ENCODE measurements at regions of chr7 and their contacts with region 1.

Region 1: DNA sequence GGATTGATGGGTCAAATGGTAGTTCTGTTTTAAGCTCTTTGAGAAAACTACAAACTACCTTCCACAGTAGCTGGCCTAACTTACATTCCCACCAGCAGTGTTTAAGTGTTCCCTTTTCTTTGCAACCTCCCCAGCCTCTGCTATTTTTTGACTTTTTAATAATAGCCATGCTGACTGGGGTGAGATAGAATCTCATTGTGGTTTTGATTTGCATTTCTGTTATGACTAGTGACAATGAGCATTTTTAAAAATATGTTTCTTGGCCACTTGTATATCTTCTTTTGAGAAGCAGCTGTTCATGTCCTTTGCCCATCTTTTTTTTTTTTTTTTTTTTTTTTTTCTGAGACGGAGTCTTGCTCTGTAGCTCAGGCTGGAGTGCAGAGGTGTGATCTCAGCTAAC is 155.2 kb upstream of the BMPER start:
- DNase-seq: no peak
- H3K4me3 ChIP-seq: no peak overlapping the region
- H3K27ac ChIP-seq: no peak overlapping the region
- H3K4me1 ChIP-seq: no peaks in the 10 kb centered on the region
- H3K27me3 ChIP-seq: no peaks in the 10 kb centered on the region
- CTCF ChIP-seq: no peak
- EP300 ChIP-seq: no peak
- POLR2A ChIP-seq: no peak

Region 2: DNA sequence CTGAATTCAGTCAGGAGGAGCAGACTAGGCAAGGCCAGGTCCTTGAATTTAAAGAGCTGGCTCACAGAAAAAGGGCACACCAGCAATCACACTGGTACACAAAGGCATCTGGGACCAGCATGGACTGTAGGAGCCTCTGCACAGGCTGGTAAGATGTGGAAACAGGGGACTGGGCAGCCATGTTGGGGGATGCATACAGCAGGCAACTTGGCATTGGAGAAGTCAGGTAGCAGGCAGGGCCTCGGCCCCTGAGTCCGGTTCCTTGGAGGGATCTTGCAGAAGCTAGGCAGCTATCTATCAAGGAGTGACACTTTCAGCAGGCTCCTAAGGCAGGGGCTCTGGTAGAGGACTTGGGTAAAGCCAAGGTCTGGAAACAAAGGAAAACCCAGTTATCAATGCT is 221.1 kb before region 1 on chr7:
- intact Hi-C with region 1: no loop called
- DNase-seq: no peak
- H3K4me3 ChIP-seq: no peak overlapping the region
- H3K27ac ChIP-seq: no peak overlapping the region
- H3K4me1 ChIP-seq: no peaks in the 10 kb centered on the region
- H3K27me3 ChIP-seq: no peaks in the 10 kb centered on the region
- CTCF ChIP-seq: no peak
- EP300 ChIP-seq: no peak
- POLR2A ChIP-seq: no peak

Region 3: DNA sequence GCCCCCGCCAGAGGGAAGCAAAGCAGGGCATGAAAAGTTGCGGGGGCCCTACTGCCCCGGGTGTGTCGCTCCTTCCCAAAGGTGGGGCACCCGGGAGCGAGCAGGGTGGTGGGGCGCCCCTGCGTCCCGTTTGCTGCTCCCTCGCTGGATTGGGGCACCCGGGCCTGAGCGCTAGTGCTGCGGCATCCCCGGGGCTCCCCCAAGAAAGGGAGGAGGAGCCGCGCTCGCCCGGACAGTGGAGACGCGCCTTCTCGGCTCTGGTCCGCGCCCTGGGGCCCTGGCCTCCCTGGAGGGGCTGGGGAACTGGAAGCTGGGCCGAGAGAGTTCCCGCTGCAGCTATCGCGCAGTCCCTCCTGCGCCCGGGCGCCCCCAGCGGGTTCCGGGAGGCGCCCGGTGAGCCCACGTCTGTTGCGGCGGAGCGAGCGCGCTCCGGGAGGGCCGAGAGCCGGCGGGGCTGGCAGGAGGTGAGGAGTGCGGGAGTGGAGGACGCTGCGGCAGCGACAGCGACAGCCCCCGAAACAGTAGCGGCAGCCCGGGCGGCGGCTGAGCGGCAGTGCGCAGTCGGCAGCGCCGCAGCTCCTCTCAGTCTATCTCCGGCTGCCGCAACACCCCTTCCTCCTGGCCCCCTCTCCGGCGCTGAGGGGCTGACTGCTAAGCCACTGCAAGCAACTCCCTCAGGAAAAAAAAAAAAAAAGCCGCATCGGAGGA is 154.7 kb after region 1 on chr7:
- intact Hi-C with region 1: loop called in 1 of 4 experiments (anchors 5 kb)
- DNase-seq: peak; percentile 50 to 74 (median 61)
- H3K4me3 ChIP-seq: peak overlapping the region; percentile 60
- H3K27ac ChIP-seq: peak overlapping the region; percentile 33 to 71
- H3K4me1 ChIP-seq: peaks cover 2% of the 10 kb centered on the region
- H3K27me3 ChIP-seq: no peaks in the 10 kb centered on the region
- CTCF ChIP-seq: peak in 2 of 3 donors; percentile 29
- EP300 ChIP-seq: no peak
- POLR2A ChIP-seq: no peak

Measured in ovary (tissue), 10 donors.